CD4-positive, alpha-beta T cell (primary cell): ENCODE measurements at regions of chr11 and their contacts with region 1.

Region 1: GRCh38 chr11:61827571-61828378 is at the start of gene FADS2:
- DNase-seq: peak in 13 of 14 experiments; percentile 23 to 88 (median 49)
- ATAC-seq: peak; percentile 80
- H3K4me3 ChIP-seq: peak within 1 kb of the TSS; percentile 64
- H3K4me3 Mint-ChIP-seq: peak within 1 kb of the TSS; percentile 85
- H3K27ac ChIP-seq: peak within 1 kb of the TSS in 1 of 2 donors; percentile 25
- H3K27ac Mint-ChIP-seq: no peak within 1 kb of the TSS
- H3K4me1 ChIP-seq: peaks cover 30% of the 10 kb centered on the region
- H3K4me1 Mint-ChIP-seq: peaks cover 14% of the 10 kb centered on the region
- H3K27me3 ChIP-seq: peaks cover 15 to 29% of the 10 kb centered on the region in 2 experiments
- H3K27me3 Mint-ChIP-seq: peaks cover 68% of the 10 kb centered on the region
- CTCF ChIP-seq: no peak
- total RNA-seq, gene FADS2: 0.08 to 0.33 TPM

Region 2: DNA sequence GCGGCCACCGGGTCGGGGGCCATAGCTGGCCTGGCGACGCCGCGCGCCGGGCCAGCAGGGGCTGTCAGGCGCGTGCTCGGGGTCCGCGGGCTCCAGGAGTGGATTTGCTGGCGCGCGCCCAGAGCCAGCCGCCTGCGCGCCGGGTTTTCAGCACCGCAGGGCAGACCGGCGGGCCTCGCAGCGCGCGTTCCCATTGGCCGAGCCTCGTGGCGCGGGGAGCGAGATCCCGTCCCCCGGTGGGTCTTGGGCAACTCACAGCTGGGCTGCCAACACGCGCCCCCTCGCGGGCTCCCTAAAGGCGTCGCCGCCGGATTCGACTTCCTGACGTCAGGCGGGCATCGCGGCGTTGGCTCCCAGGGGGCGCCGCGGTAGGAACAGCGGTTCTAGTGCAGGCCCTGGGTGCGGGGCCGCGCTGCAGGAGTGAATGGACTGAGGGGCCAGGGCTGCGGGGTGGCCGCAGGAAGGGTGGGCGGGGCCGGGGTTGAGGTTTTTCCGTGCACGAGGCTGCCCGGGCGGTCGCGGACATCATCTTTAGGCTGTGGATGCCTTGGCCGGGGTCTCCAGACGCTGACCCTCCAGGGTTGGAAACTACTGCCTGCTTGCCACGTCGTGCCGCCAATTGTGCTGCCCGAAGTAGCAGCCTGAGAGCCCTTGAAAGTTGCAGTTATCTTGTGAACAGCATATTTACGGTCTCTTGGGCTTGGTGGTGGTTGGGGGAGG is 10.9 kb before region 1 on chr11 and contains the start of gene FADS1:
- CTCF ChIA-PET with region 1: interaction called, 18 read pairs
- POLR2A ChIA-PET with region 1: interaction called, 3 read pairs
- intact Hi-C with region 1: no loop called
- DNase-seq: peak; percentile 38 to 87 (median 58)
- ATAC-seq: peak; percentile 64
- H3K4me3 ChIP-seq: peak within 1 kb of the TSS; percentile 71
- H3K4me3 Mint-ChIP-seq: peak within 1 kb of the TSS; percentile 89
- H3K27ac ChIP-seq: no peak within 1 kb of the TSS
- H3K27ac Mint-ChIP-seq: no peak within 1 kb of the TSS
- H3K4me1 ChIP-seq: peaks cover 26% of the 10 kb centered on the region
- H3K4me1 Mint-ChIP-seq: peaks cover 13% of the 10 kb centered on the region
- H3K27me3 ChIP-seq: peaks cover 19 to 31% of the 10 kb centered on the region in 2 experiments
- H3K27me3 Mint-ChIP-seq: peaks cover 59% of the 10 kb centered on the region
- CTCF ChIP-seq: peak; percentile 67
- total RNA-seq, gene FADS1: 0.56 to 0.77 TPM